CD14-positive monocyte (primary cell): ENCODE measurements at regions of chr21 and their contacts with region 1.

Region 1: GRCh38 chr21:29656504-29657239 is 283.1 kb downstream of the GRIK1 start:
- DNase-seq: peak; percentile 89 to 97 (median 96)
- H3K4me3 ChIP-seq: peak overlapping the region in 2 of 3 experiments; percentile 22 to 50
- H3K4me3 Mint-ChIP-seq: peak overlapping the region in 1 of 2 donors; percentile 77
- H3K27ac ChIP-seq: peak overlapping the region; percentile 76 to 99
- H3K27ac Mint-ChIP-seq: peak overlapping the region; percentile 93 to 100 (median 98)
- H3K4me1 ChIP-seq: peaks cover 32% of the 10 kb centered on the region in 2 donors
- H3K4me1 Mint-ChIP-seq: peaks cover 30% of the 10 kb centered on the region
- H3K27me3 ChIP-seq: no peaks in the 10 kb centered on the region
- H3K27me3 Mint-ChIP-seq: no peaks in the 10 kb centered on the region
- CTCF ChIP-seq: no peak

Region 2: GRCh38 chr21:29601072-29601471 is 55.6 kb before region 1 on chr21:
- intact Hi-C with region 1: no loop called
- DNase-seq: no peak
- H3K4me3 ChIP-seq: no peak overlapping the region
- H3K4me3 Mint-ChIP-seq: no peak overlapping the region
- H3K27ac ChIP-seq: no peak overlapping the region
- H3K27ac Mint-ChIP-seq: no peak overlapping the region
- H3K4me1 ChIP-seq: no peaks in the 10 kb centered on the region
- H3K4me1 Mint-ChIP-seq: no peaks in the 10 kb centered on the region
- H3K27me3 ChIP-seq: no peaks in the 10 kb centered on the region
- H3K27me3 Mint-ChIP-seq: peaks cover 0 to 3% (median 0%) of the 10 kb centered on the region in 3 donors
- CTCF ChIP-seq: no peak

Region 3: GRCh38 chr21:29616352-29616751 is 40.3 kb before region 1 on chr21:
- intact Hi-C with region 1: no loop called
- DNase-seq: no peak
- H3K4me3 ChIP-seq: no peak overlapping the region
- H3K4me3 Mint-ChIP-seq: no peak overlapping the region
- H3K27ac ChIP-seq: no peak overlapping the region
- H3K27ac Mint-ChIP-seq: no peak overlapping the region
- H3K4me1 ChIP-seq: no peaks in the 10 kb centered on the region
- H3K4me1 Mint-ChIP-seq: no peaks in the 10 kb centered on the region
- H3K27me3 ChIP-seq: no peaks in the 10 kb centered on the region
- H3K27me3 Mint-ChIP-seq: no peaks in the 10 kb centered on the region
- CTCF ChIP-seq: no peak

Region 4: GRCh38 chr21:29640080-29640508 is 16.6 kb before region 1 on chr21:
- intact Hi-C with region 1: loop called in 1 of 2 experiments (anchors 2 kb)
- DNase-seq: peak; percentile 78 to 88 (median 86)
- H3K4me3 ChIP-seq: peak overlapping the region in 1 of 3 experiments; percentile 49
- H3K4me3 Mint-ChIP-seq: peak overlapping the region in 1 of 2 donors; percentile 72
- H3K27ac ChIP-seq: peak overlapping the region; percentile 90 to 93
- H3K27ac Mint-ChIP-seq: peak overlapping the region; percentile 94 to 99 (median 97)
- H3K4me1 ChIP-seq: peaks cover 34 to 47% of the 10 kb centered on the region in 2 donors
- H3K4me1 Mint-ChIP-seq: peaks cover 41% of the 10 kb centered on the region
- H3K27me3 ChIP-seq: no peaks in the 10 kb centered on the region
- H3K27me3 Mint-ChIP-seq: no peaks in the 10 kb centered on the region
- CTCF ChIP-seq: no peak